Heart left ventricle (tissue), 16 donors: ENCODE measurements at regions of chr5 and their contacts with region 1.

Region 1: GRCh38 chr5:150458819-150459557 is 9.4 kb upstream of the RPS14 start:
- DNase-seq: peak; percentile 75 to 90 (median 80)
- ATAC-seq: peak; percentile 86 to 96 (median 92)
- H3K4me3 ChIP-seq: peak overlapping the region in 8 of 12 donors; percentile 15 to 46 (median 36)
- H3K27ac ChIP-seq: peak overlapping the region in 2 of 12 donors; percentile 2 to 53
- H3K4me1 ChIP-seq: peaks cover 0 to 14% (median 4%) of the 10 kb centered on the region in 12 donors
- H3K27me3 ChIP-seq: no peaks in the 10 kb centered on the region
- CTCF ChIP-seq: peak; percentile 68 to 97 (median 82)
- POLR2A ChIP-seq: no peak

Region 2: GRCh38 chr5:150497274-150497988 is 38.4 kb after region 1 on chr5:
- intact Hi-C with region 1: loop called in 1 of 10 experiments (anchors 5 kb)
- DNase-seq: peak in 3 of 5 donors; percentile 51 to 89 (median 73)
- ATAC-seq: peak; percentile 12 to 88 (median 76)
- H3K4me3 ChIP-seq: no peak overlapping the region
- H3K27ac ChIP-seq: peak overlapping the region; percentile 63 to 88 (median 82)
- H3K4me1 ChIP-seq: peaks cover 21 to 80% (median 71%) of the 10 kb centered on the region in 12 donors
- H3K27me3 ChIP-seq: no peaks in the 10 kb centered on the region
- CTCF ChIP-seq: peak in 1 of 12 donors; percentile 7
- POLR2A ChIP-seq: no peak

Region 3: DNA sequence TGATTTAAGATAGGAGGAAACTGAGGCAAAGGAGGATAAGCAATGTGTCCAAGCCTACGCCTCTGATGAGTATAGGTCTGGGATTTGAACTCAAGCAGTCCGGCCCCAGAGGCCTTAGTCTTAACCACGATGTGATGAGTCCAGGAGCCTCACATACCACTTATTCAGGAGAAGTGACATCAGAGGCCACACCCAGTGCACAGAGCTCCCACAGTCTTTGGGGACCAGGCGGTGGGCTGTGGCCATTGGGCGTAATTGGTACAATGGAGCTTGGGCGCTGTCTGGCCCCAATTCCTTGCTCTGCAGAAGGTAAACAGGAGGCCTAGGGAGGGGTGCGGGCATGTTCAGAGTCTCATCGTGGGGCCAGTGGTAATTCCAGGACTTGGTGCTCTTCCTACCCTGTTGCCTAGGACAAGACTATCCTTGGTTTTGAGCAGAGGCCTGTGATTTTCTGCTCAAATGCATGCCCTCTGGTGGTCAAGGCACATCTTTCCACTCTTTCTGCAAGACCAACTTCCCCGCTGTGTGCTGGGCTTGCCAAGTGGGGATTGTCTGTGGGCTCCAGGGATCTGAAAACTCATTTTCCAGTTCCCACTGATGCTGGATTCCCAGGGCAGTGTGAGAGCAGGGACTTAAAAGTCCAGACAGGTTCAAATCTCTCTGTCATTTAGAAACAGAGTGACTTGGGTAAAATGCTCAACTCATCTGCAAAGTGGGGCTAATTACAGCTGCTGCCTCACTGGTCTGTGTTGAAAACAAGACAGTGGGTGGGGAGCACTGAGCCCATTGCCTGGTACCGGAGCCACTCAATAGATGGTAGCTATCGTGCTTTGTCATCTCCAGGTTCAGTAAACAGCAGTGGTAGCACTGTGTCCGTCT is 64.7 kb after region 1 on chr5:
- intact Hi-C with region 1: loop called (anchors 1 to 5 kb)
- DNase-seq: peak in 4 of 5 donors; percentile 52 to 57 (median 54)
- ATAC-seq: peak; percentile 18 to 61 (median 46)
- H3K4me3 ChIP-seq: no peak overlapping the region
- H3K27ac ChIP-seq: peak overlapping the region; percentile 53 to 89 (median 72)
- H3K4me1 ChIP-seq: peaks cover 16 to 88% (median 69%) of the 10 kb centered on the region in 12 donors
- H3K27me3 ChIP-seq: no peaks in the 10 kb centered on the region
- CTCF ChIP-seq: peak; percentile 56 to 75 (median 67)
- POLR2A ChIP-seq: no peak

Region 4: GRCh38 chr5:150544611-150545219 is 85.7 kb after region 1 on chr5:
- intact Hi-C with region 1: loop called (anchors 1 to 5 kb)
- DNase-seq: peak; percentile 78 to 88 (median 83)
- ATAC-seq: peak; percentile 74 to 83 (median 78)
- H3K4me3 ChIP-seq: no peak overlapping the region
- H3K27ac ChIP-seq: peak overlapping the region in 1 of 12 donors; percentile 10
- H3K4me1 ChIP-seq: peaks cover 0 to 40% (median 16%) of the 10 kb centered on the region in 12 donors
- H3K27me3 ChIP-seq: no peaks in the 10 kb centered on the region
- CTCF ChIP-seq: peak; percentile 81 to 95 (median 88)
- POLR2A ChIP-seq: no peak

Region 5: GRCh38 chr5:150694612-150695011 is 235.6 kb after region 1 on chr5:
- intact Hi-C with region 1: loop called in 1 of 10 experiments (anchors 10 kb)
- DNase-seq: no peak
- ATAC-seq: no peak
- H3K4me3 ChIP-seq: no peak overlapping the region
- H3K27ac ChIP-seq: no peak overlapping the region
- H3K4me1 ChIP-seq: peaks cover 0 to 13% (median 9%) of the 10 kb centered on the region in 12 donors
- H3K27me3 ChIP-seq: no peaks in the 10 kb centered on the region
- CTCF ChIP-seq: no peak
- POLR2A ChIP-seq: no peak

Region 6: DNA sequence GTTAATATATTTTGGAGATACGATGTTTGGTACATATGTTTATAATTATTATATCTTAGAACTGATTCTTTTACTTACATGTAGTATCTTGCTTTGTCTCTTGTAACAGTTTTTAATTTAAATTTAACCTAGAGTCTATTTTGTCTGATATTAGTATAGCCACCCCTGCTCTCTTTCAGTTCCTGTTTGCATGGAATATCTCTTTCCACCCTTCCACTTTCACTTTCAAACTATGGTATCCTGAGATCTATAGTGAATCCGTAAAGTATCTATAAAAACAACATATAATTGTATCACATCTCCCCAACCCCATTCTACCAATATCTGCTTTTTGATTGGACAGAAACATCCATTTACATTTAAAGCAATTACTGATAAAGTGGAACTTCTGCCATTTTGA is 394.6 kb after region 1 on chr5:
- intact Hi-C with region 1: loop called in 5 of 10 experiments (anchors 5 to 10 kb)
- DNase-seq: no peak
- ATAC-seq: no peak
- H3K4me3 ChIP-seq: no peak overlapping the region
- H3K27ac ChIP-seq: no peak overlapping the region
- H3K4me1 ChIP-seq: no peaks in the 10 kb centered on the region
- H3K27me3 ChIP-seq: no peaks in the 10 kb centered on the region
- CTCF ChIP-seq: no peak
- POLR2A ChIP-seq: no peak